ENCODE measurements at regions of chr12 and their contacts with region 1.

Region 1: GRCh38 chr12:32062881-32063280 is 43.8 kb upstream of the BICD1 start:
- DNase-seq: no peak
- H3K4me3 Mint-ChIP-seq: no peak overlapping the region
- H3K27ac Mint-ChIP-seq: no peak overlapping the region
- H3K4me1 Mint-ChIP-seq: no peaks in the 10 kb centered on the region
- H3K27me3 Mint-ChIP-seq: no peaks in the 10 kb centered on the region

Region 2: GRCh38 chr12:31756977-31757420 is 305.9 kb before region 1 on chr12:
- intact Hi-C with region 1: no loop called
- DNase-seq: no peak
- H3K4me3 Mint-ChIP-seq: no peak overlapping the region
- H3K27ac Mint-ChIP-seq: no peak overlapping the region
- H3K4me1 Mint-ChIP-seq: peaks cover 21% of the 10 kb centered on the region
- H3K27me3 Mint-ChIP-seq: no peaks in the 10 kb centered on the region

Region 3: DNA sequence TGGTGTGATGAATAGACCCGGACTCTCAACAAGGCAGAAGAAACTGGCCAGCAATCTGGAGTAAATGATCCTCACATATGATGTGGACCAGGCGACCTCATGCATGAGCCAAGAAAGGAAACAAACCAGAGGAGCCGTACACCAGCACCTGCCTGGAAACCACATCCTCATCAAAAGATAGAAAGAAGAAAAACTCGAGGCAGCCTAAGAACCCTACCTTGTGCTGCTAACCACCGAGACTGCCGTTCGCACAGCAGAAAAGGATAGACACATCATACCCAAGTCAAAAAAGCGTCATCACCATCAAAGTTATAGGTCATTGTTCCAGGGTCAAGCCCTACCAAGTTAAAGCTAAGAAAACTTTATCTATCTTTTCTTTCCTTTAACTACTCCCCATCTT is 37.0 kb before region 1 on chr12:
- intact Hi-C with region 1: loop called (anchors 2 kb)
- DNase-seq: peak; percentile 55
- H3K4me3 Mint-ChIP-seq: peak overlapping the region; percentile 2
- H3K27ac Mint-ChIP-seq: peak overlapping the region; percentile 62
- H3K4me1 Mint-ChIP-seq: peaks cover 29% of the 10 kb centered on the region
- H3K27me3 Mint-ChIP-seq: no peaks in the 10 kb centered on the region

Region 4: GRCh38 chr12:32106517-32107358 is 43.9 kb after region 1 on chr12 and contains the start of gene BICD1:
- intact Hi-C with region 1: loop called (anchors 1 kb)
- DNase-seq: peak; percentile 76
- H3K4me3 Mint-ChIP-seq: peak within 1 kb of the TSS; percentile 98
- H3K27ac Mint-ChIP-seq: peak within 1 kb of the TSS; percentile 87
- H3K4me1 Mint-ChIP-seq: peaks cover 36% of the 10 kb centered on the region
- H3K27me3 Mint-ChIP-seq: peaks cover 19% of the 10 kb centered on the region
- total RNA-seq, gene BICD1: 20.9 and 22.2 TPM in 2 replicates

Region 5: DNA sequence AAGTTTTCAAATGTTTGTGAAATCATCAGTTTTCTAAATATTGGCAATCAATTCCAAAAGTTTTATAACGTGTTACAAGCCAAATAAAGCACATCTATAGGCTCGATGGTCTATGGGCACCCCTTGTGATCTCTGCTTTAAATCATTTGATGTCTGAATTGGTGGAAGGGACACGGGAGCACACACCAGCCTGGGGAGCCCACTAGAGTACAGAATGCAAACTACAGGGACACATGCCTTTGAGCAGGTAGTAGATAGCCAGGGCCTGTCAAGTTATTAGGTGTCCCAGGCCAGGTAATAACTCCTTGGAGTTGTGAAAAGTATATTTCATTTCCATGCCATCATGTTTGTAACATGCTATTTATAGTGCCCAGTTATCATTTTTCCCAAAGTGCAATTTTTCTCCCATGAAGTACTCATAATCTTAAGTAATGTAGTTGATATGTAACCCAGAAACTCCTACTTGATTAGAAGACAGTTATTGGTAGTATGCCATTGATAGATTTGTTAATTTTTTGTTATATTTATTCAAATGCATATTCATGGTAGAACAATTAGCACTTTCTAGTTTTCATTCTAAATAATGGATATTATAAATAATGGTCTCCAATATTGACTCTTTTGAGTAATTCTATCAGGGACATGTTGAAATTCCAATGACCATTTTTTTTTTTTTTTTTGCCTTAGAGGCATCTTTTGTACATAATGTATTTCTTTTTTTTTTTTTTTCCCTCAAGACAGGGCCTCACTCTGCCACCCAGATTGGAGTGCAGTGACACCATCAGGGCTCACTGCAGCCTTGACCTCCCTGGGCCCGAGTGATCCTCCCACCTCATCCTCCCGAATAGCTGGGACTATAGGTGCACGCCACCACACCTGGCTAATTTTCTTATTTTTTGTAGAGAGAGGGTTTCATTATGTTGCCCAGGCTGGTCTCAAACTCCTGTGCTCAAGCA is 239.6 kb after region 1 on chr12:
- intact Hi-C with region 1: loop called (anchors 2 kb)
- DNase-seq: no peak
- H3K4me3 Mint-ChIP-seq: no peak overlapping the region
- H3K27ac Mint-ChIP-seq: no peak overlapping the region
- H3K4me1 Mint-ChIP-seq: no peaks in the 10 kb centered on the region
- H3K27me3 Mint-ChIP-seq: no peaks in the 10 kb centered on the region

Region 6: GRCh38 chr12:32312049-32312670 is 249.3 kb after region 1 on chr12:
- intact Hi-C with region 1: loop called (anchors 1 kb)
- DNase-seq: no peak
- H3K4me3 Mint-ChIP-seq: no peak overlapping the region
- H3K27ac Mint-ChIP-seq: no peak overlapping the region
- H3K4me1 Mint-ChIP-seq: peaks cover 5% of the 10 kb centered on the region
- H3K27me3 Mint-ChIP-seq: no peaks in the 10 kb centered on the region

Measured in activated T-helper 1 cell treated with anti-CD3 and anti-CD28 coated beads, Interleukin-12 subunit alpha, Interleukin-12 subunit beta, Interleukin-2, Interleukin-4 antibody, amounts not matched to agents 30 ng/mL and 10 ng/mL and 1 ng/mL, durations not matched to agents 14 hours and 24 hours and 36 hours (primary cell).